ENCODE measurements at regions of chr10 and their contacts with region 1.

Region 1: DNA sequence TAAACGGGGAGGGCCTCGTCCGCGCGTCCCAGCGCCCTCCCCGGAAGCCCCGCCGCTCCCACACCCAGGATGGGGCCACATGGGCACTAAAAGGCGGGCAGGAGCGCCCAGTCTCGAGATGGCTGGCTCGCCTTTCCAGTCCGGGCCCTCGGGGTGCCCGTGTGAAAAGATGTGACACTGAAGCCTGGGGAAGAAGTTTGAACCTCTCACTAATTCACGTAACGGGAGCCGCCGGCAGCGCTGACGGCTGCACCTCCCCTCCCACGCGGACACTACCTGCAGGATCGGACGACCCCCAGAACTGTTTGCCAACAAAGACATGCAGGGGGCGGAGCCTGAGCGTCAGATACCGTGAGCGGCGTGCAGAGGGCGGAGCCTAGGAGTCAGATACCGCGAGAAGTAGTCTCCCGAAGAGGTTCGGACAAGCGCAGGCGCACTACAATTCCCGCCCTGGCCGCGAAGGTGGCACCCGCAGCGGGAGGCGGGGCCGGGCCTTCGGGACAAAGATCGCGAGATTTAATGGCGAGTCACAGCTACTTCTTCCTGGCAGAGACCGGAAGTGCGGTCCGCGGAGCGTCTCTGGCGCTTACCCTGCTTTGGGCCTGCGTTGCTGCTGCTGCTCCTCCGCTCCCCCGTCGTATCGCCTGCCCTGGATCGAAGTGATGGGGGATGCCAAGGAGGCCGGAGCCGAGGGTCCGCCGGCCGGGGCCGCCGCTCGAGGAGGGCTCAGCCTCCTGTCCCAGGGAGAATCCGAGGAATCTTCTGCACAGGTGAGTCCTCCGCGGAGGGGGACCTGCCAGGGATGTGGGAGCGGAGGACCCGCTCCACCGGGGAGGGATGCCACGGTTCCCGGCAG is at the start of gene EDRF1:
- DNase-seq: peak; percentile 99
- ATAC-seq: peak; percentile 100
- total RNA-seq, gene EDRF1: 9.9 TPM

Region 2: DNA sequence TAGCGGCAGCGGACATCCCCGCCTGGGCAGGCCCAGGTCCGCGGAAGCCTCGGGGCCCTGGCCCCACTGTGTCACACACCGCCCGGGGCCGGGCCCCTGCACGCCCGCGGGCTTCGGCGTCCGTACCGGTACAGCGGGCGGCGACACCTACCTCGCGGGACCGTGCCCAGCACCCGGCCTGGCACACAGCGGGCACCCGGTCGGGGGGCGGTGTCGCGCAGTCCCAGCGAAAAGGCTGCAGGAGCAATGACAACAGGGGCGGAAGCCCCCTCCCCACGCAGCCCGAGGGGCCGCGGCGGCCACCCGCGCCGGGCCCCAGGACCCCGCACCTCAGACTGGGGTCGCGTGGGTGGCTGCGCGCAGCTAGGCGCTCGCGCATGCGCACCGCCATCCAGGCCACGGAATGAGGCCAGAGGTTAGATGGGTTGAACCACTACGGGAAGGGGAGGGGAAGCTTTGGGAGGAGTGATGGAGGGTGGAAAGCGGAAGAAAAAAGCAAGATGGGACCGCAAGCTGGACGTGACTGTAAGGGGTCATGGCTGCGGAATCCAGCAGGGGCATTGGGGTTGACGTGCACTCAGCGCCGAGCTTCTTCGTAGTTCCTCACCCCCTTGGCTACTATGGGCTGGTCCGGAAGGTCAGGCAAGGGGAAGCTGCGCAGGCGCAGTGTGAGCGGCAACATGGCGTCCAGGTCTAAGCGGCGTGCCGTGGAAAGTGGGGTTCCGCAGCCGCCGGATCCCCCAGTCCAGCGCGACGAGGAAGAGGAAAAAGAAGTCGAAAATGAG is 103.7 kb after region 1 on chr10 and contains the starts of genes BCCIP and UROS:
- intact Hi-C with region 1: loop called (anchors 10 kb)
- DNase-seq: peak; percentile 96
- ATAC-seq: peak; percentile 94
- total RNA-seq, gene BCCIP: 43.4 TPM
- total RNA-seq, gene UROS: 75.2 TPM

Measured in left ventricle myocardium superior (tissue), 1 donor.